Right cardiac atrium (tissue), 5 donors: ENCODE measurements at regions of chr14 and their contacts with region 1.

Region 1: DNA sequence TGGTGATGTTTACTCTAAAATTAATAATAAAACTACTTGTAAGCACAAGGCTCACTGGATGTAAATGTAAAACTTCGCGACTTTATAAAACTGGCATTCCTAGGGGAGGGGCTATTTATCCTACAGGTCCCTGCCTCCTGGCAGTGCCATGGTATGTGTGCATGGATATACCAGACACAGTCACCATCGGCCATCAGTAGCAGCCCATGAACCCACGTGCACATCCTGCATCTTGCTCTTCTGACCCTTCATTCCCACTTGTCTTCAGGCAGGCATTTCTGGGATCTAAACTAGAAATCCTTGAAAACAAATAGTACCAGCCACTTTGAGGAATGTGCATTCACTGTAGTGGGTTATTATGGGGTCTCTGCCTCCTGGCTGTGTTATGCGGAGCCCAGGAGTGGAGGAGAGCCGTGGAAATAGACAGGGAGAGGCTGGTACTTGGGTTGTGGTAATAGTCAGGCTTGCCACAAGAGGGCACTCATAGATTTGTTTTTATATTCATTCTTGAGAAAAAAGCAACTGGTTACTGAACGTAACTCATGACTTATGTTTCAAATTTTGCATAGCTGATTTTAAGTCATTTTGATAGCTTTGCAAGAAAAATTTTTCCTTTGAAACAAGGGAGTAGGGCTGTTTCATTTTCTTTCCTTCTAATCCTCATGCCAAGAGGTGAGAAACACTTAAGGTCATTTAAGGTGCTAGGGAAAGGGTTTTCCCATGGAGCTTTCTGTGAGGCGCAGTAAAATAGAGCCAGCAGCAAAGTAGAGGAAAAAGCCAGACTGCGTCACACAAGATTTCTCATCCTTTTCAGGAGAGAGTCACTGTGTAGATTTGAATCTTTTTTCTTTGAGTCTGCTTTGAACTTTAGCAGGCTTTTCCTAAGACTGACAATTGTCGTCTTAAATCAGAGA is 17.4 kb upstream of the GALNT16 start:
- DNase-seq: peak in 2 of 3 donors; percentile 44 to 46
- ATAC-seq: peak; percentile 65 to 80
- H3K4me3 ChIP-seq: no peak overlapping the region
- H3K27ac ChIP-seq: no peak overlapping the region
- H3K4me1 ChIP-seq: no peaks in the 10 kb centered on the region
- H3K27me3 ChIP-seq: no peaks in the 10 kb centered on the region

Region 2: DNA sequence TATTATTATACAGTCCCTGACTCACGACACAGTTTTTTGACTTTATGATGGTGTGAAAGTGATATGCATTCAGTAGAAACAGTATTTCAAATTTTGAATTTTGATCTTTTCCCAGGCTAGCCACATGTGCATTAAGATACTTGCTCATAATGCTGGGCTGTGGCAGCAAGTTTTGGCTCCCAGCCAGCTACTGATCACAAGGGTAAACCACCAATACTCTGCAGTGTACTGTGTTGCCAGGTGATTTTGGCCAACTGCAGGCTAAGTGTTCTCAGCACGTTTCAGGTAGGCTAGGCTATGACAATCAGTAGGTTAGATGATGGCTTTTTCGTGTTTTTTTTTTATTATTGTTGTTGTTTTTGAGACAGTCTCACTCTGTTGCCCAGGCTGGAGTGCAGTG is 194.1 kb before region 1 on chr14:
- intact Hi-C with region 1: no loop called
- DNase-seq: peak in 1 of 3 donors; percentile 64
- ATAC-seq: no peak
- H3K4me3 ChIP-seq: no peak overlapping the region
- H3K27ac ChIP-seq: peak overlapping the region; percentile 67
- H3K4me1 ChIP-seq: peaks cover 44% of the 10 kb centered on the region
- H3K27me3 ChIP-seq: no peaks in the 10 kb centered on the region

Region 3: DNA sequence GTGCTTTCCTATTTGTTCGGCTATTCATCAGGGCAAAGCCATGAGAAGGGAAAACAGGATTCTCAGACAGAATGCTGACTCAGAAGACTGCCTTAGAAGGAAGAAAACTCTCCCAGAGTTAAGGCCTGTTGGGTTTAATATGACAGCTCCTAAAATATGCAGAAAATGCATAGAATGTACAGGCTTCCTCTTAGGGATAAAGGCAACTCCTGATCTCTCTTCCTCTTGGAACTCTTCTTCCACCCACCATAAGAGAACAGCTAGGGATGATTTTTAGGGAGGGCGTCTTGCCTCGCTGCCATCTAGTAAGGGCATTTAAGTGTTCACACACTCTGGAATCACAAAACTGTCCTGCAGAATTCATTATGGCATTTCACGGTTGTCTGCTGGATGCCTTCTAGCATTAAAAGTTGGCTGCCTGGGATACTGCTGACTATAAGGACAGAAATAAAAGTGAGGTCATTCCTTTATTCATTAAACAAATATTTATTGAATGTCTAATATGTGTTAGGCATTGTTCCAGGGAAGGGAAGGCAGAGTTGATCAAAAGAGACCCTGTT is 163.3 kb before region 1 on chr14:
- intact Hi-C with region 1: no loop called
- DNase-seq: no peak
- ATAC-seq: peak; percentile 47 to 70
- H3K4me3 ChIP-seq: no peak overlapping the region
- H3K27ac ChIP-seq: peak overlapping the region; percentile 81
- H3K4me1 ChIP-seq: peaks cover 3% of the 10 kb centered on the region
- H3K27me3 ChIP-seq: no peaks in the 10 kb centered on the region

Region 4: GRCh38 chr14:69346710-69347109 is 104.1 kb after region 1 on chr14:
- intact Hi-C with region 1: loop called in 2 of 4 experiments (anchors 5 to 10 kb)
- DNase-seq: peak; percentile 34 to 78 (median 74)
- ATAC-seq: peak; percentile 25 to 33
- H3K4me3 ChIP-seq: no peak overlapping the region
- H3K27ac ChIP-seq: no peak overlapping the region
- H3K4me1 ChIP-seq: no peaks in the 10 kb centered on the region
- H3K27me3 ChIP-seq: no peaks in the 10 kb centered on the region

Region 5: GRCh38 chr14:69363055-69363454 is 120.5 kb after region 1 on chr14:
- intact Hi-C with region 1: loop called in 2 of 4 experiments (anchors 5 to 10 kb)
- DNase-seq: peak; percentile 26 to 72 (median 65)
- ATAC-seq: peak; percentile 82 to 84
- H3K4me3 ChIP-seq: no peak overlapping the region
- H3K27ac ChIP-seq: no peak overlapping the region
- H3K4me1 ChIP-seq: no peaks in the 10 kb centered on the region
- H3K27me3 ChIP-seq: no peaks in the 10 kb centered on the region

Region 6: GRCh38 chr14:69460093-69460701 is 217.6 kb after region 1 on chr14:
- intact Hi-C with region 1: loop called (anchors 5 to 10 kb)
- DNase-seq: peak; percentile 56 to 72 (median 61)
- ATAC-seq: peak; percentile 77 to 85
- H3K4me3 ChIP-seq: no peak overlapping the region
- H3K27ac ChIP-seq: no peak overlapping the region
- H3K4me1 ChIP-seq: no peaks in the 10 kb centered on the region
- H3K27me3 ChIP-seq: no peaks in the 10 kb centered on the region